ENCODE measurements at regions of chr6 and their contacts with region 1.

Region 1: GRCh38 chr6:110039364-110039980 is 61.4 kb downstream of the GPR6 start:
- DNase-seq: peak; percentile 88
- H3K4me3 Mint-ChIP-seq: peak overlapping the region; percentile 78
- H3K27ac Mint-ChIP-seq: peak overlapping the region; percentile 91
- H3K4me1 Mint-ChIP-seq: peaks cover 20% of the 10 kb centered on the region
- H3K27me3 Mint-ChIP-seq: peaks cover 7% of the 10 kb centered on the region

Region 2: DNA sequence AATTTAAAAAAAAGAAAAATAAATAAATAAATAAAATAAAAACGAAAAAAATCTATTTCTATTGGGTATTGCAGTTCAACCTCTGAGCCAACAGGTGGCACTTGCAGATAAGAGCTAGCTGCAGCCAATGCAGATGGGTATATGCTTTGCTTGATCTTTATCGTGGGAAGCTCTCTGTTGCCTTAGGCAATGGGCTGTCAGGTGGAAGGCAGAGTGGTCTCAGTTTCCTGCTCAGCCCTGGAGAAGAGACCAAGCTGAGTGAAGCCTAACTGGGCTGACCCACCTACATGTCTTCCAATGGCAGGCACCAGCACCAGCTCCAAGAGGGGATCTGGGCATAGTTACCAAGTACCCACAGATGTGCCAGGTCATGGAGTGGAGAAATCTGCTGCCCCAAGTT is 443.5 kb before region 1 on chr6:
- CTCF ChIA-PET with region 1: interaction called, 20 read pairs
- DNase-seq: peak; percentile 26
- H3K4me3 Mint-ChIP-seq: no peak overlapping the region
- H3K27ac Mint-ChIP-seq: no peak overlapping the region
- H3K4me1 Mint-ChIP-seq: peaks cover 3% of the 10 kb centered on the region
- H3K27me3 Mint-ChIP-seq: peaks cover 11% of the 10 kb centered on the region

Region 3: GRCh38 chr6:109705258-109705657 is 334.2 kb before region 1 on chr6:
- CTCF ChIA-PET with region 1: interaction called, 225 read pairs
- DNase-seq: peak; percentile 85
- H3K4me3 Mint-ChIP-seq: no peak overlapping the region
- H3K27ac Mint-ChIP-seq: no peak overlapping the region
- H3K4me1 Mint-ChIP-seq: peaks cover 2% of the 10 kb centered on the region
- H3K27me3 Mint-ChIP-seq: no peaks in the 10 kb centered on the region

Region 4: DNA sequence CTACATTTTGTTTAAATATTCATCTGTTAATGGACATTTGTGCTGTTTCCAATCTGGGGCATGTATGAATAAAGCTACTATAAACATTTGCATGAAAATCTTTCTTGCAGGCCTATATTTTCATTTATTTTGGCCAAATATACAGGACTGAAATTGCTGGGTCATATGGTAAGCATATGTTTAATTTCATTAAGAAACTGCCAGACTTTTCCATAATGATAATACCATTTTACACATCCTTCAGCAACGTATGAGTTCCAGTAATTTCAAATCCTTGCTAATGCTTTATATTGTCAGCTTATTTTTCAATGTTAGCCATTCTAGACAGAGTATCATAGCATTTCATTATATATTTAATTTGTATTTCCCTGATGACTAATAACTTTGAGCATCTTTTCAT is 10.3 kb before region 1 on chr6:
- CTCF ChIA-PET with region 1: interaction called, 26 read pairs
- DNase-seq: no peak
- H3K4me3 Mint-ChIP-seq: no peak overlapping the region
- H3K27ac Mint-ChIP-seq: no peak overlapping the region
- H3K4me1 Mint-ChIP-seq: no peaks in the 10 kb centered on the region
- H3K27me3 Mint-ChIP-seq: peaks cover 4% of the 10 kb centered on the region

Region 5: GRCh38 chr6:110389689-110390382 is 350.4 kb after region 1 on chr6:
- CTCF ChIA-PET with region 1: interaction called, 70 read pairs
- DNase-seq: no peak
- H3K4me3 Mint-ChIP-seq: no peak overlapping the region
- H3K27ac Mint-ChIP-seq: no peak overlapping the region
- H3K4me1 Mint-ChIP-seq: peaks cover 15% of the 10 kb centered on the region
- H3K27me3 Mint-ChIP-seq: no peaks in the 10 kb centered on the region

Measured in activated naive CD4-positive, alpha-beta T cell treated with anti-CD3 and anti-CD28 coated beads, Interleukin-2, amount 10 ng/mL, durations not matched to agents 7 days and 5 days (primary cell).